ENCODE measurements at regions of chr1 and their contacts with region 1.

Region 1: DNA sequence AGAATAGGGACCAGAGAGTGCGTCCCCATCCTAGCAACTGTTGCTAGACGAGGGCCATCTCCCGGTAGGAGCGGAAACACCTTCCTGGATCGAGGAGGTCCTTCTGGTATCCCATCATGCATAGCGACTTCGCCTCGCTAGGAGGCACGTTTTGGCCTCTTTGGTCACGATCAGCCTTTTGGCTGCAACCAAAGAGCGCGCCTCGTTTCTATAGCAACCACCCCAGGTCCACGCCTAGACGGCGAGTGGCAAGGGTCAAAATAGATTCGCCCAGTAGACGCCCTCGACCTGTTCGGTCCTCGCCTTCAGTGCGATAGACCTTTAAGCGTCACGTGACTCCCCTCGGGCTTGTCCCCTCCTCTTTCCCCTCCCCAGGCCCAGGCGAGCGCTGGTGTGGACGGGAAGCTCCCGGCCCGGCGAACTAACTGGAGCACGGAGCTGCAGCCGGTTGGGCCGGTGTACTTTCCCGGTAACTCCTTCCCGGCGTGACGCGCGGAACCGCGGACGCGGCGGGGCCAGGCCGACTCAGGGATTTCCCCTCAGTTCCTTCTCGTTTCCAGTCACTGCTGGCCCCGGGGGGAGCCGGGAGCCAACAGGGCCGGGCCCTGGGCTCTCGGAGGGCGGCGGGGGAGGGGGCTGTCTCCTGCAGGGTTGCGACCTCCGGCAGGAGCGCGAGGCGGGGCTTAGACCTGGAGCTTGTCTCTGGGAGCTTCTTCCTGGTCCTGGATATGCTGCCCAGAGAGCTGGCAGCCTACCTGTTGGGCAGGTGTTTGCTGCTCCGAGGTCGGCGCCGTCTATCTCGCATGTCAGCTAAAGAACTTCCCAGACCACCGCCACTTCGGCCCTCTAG is at the start of gene DNAJC16:
- DNase-seq: peak; percentile 92 to 100 (median 93)
- ATAC-seq: peak; percentile 83
- H3K4me3 ChIP-seq: peak within 1 kb of the TSS; percentile 77
- H3K27ac ChIP-seq: peak within 1 kb of the TSS; percentile 77
- H3K4me1 ChIP-seq: peaks cover 7 to 25% of the 10 kb centered on the region in 2 experiments; a peak in 4 of 5 replicates
- H3K27me3 ChIP-seq: no peaks in the 10 kb centered on the region
- CTCF ChIP-seq: peak; percentile 31 to 63 (median 57); a peak in 4 of 6 replicates
- EP300 ChIP-seq: peak; percentile 34
- POLR2A ChIP-seq: peak; percentile 97
- RAD21 ChIP-seq: no peak
- polyA plus RNA-seq, gene DNAJC16: 6.9 to 8.6 TPM

Region 2: GRCh38 chr1:15543589-15544568 is 17.2 kb after region 1 on chr1:
- CTCF ChIA-PET with region 1: no interaction called
- POLR2A ChIA-PET with region 1: interaction called, 7 read pairs
- in situ Hi-C with region 1: no loop called
- intact Hi-C with region 1: loop called (anchors 2 kb)
- DNase-seq: peak; percentile 70 to 97 (median 84)
- ATAC-seq: peak; percentile 96
- H3K4me3 ChIP-seq: no peak overlapping the region
- H3K27ac ChIP-seq: peak overlapping the region; percentile 98
- H3K4me1 ChIP-seq: peaks cover 16 to 37% of the 10 kb centered on the region in 2 experiments
- H3K27me3 ChIP-seq: no peaks in the 10 kb centered on the region
- CTCF ChIP-seq: no peak
- EP300 ChIP-seq: peak; percentile 98
- POLR2A ChIP-seq: 0 out of 2 replicates have a peak, but pooled peaks have one; percentile 45
- RAD21 ChIP-seq: peak; percentile 3 to 24; a peak in 1 of 4 replicates